CD4-positive, alpha-beta T cell (primary cell): ENCODE measurements at regions of chr17 and their contacts with region 1.

Region 1: DNA sequence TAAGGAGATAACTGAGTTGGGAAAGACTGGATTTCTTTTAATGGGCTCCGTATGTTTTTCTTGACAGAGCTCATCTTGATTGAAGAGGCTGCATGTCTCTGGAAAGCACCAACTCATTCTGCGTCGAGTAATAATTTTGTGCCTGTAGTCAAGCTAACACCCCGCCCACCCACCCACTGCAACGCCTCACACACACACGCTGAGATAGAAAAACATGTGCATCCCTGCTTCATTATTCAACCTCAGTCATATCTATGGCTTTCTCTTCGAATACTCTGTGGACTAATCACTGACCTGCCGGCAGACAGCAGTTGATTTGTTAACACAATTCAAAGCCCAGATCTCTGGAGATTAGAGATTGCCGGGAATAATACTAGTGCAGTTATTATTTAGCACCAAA is 220.2 kb upstream of the TOM1L1 start:
- DNase-seq: no peak
- ATAC-seq: no peak
- H3K4me3 ChIP-seq: no peak overlapping the region
- H3K4me3 Mint-ChIP-seq: no peak overlapping the region
- H3K27ac ChIP-seq: no peak overlapping the region
- H3K27ac Mint-ChIP-seq: no peak overlapping the region
- H3K4me1 ChIP-seq: no peaks in the 10 kb centered on the region
- H3K4me1 Mint-ChIP-seq: no peaks in the 10 kb centered on the region
- H3K27me3 ChIP-seq: no peaks in the 10 kb centered on the region
- H3K27me3 Mint-ChIP-seq: no peaks in the 10 kb centered on the region
- CTCF ChIP-seq: no peak

Region 2: DNA sequence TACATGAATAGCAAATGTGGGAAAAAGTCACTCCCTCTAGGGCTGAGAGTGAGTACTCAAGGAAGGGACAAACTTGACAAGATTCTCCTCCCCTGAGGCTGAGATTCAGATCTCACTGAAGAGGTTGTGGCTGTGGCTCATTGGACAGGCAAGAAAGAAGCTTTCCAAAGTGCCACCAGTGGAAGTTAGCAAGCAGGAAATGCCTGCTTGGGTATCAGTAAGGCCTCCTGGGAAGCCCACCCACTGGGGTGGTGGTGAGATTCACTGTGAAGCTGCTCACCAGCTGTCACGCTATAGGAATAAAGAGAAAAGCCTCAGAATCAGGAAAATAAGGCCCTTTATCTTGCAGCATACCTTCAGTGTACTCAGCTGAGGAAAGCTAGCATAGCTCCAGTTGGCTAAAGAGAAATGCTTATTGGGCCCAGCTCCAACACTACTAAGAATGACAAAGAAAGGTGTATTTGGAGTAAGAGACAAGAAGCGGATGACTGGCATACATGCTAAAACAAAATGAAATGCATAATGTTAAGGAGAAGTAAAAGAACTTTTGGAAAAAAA is 54.2 kb before region 1 on chr17:
- CTCF ChIA-PET with region 1: no interaction called
- POLR2A ChIA-PET with region 1: no interaction called
- intact Hi-C with region 1: loop called in 1 of 2 experiments (anchors 10 kb)
- DNase-seq: no peak
- ATAC-seq: no peak
- H3K4me3 ChIP-seq: no peak overlapping the region
- H3K4me3 Mint-ChIP-seq: no peak overlapping the region
- H3K27ac ChIP-seq: no peak overlapping the region
- H3K27ac Mint-ChIP-seq: no peak overlapping the region
- H3K4me1 ChIP-seq: no peaks in the 10 kb centered on the region
- H3K4me1 Mint-ChIP-seq: no peaks in the 10 kb centered on the region
- H3K27me3 ChIP-seq: no peaks in the 10 kb centered on the region
- H3K27me3 Mint-ChIP-seq: no peaks in the 10 kb centered on the region
- CTCF ChIP-seq: no peak